ENCODE measurements at regions of chr14 and their contacts with region 1.

Region 1: GRCh38 chr14:94373708-94374107 is 14.7 kb downstream of the SERPINA1 start:
- DNase-seq: no peak
- ATAC-seq: no peak
- H3K4me3 Mint-ChIP-seq: no peak overlapping the region
- H3K27ac Mint-ChIP-seq: no peak overlapping the region; the same call in 1 of the 2 replicates
- H3K4me1 Mint-ChIP-seq: peaks cover 23% of the 10 kb centered on the region
- H3K27me3 Mint-ChIP-seq: no peaks in the 10 kb centered on the region
- CTCF ChIP-seq: no peak

Region 2: DNA sequence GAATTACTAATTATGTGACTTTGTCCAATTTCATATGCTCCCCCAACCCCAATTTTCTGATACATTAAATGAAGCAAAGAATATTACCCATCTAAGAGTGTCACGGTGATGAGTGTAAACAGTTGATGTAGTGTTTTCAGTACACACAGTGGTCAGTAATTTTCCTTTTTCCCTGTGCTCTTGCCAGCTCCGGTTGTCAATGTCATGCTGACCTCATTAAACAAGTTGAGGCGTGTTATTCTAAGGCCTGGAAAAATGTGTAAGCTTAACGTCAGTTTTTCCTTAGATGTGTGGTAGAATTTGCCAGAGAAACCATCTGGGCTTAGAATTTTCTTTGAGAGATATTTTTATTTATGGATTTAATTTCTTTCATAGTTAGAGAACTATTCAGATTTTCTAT is 38.9 kb before region 1 on chr14:
- CTCF ChIA-PET with region 1: no interaction called
- POLR2A ChIA-PET with region 1: no interaction called
- DNase-seq: no peak
- ATAC-seq: no peak
- H3K4me3 Mint-ChIP-seq: no peak overlapping the region
- H3K27ac Mint-ChIP-seq: no peak overlapping the region
- H3K4me1 Mint-ChIP-seq: no peaks in the 10 kb centered on the region
- H3K27me3 Mint-ChIP-seq: no peaks in the 10 kb centered on the region
- CTCF ChIP-seq: no peak

Region 3: GRCh38 chr14:94355191-94355797 is 18.4 kb before region 1 on chr14:
- CTCF ChIA-PET with region 1: interaction called, 15 read pairs
- POLR2A ChIA-PET with region 1: no interaction called
- DNase-seq: peak; percentile 69
- ATAC-seq: peak; percentile 98
- H3K4me3 Mint-ChIP-seq: no peak overlapping the region
- H3K27ac Mint-ChIP-seq: peak overlapping the region; percentile 20; the same call in 1 of the 2 replicates
- H3K4me1 Mint-ChIP-seq: peaks cover 16% of the 10 kb centered on the region
- H3K27me3 Mint-ChIP-seq: no peaks in the 10 kb centered on the region
- CTCF ChIP-seq: no peak

Region 4: DNA sequence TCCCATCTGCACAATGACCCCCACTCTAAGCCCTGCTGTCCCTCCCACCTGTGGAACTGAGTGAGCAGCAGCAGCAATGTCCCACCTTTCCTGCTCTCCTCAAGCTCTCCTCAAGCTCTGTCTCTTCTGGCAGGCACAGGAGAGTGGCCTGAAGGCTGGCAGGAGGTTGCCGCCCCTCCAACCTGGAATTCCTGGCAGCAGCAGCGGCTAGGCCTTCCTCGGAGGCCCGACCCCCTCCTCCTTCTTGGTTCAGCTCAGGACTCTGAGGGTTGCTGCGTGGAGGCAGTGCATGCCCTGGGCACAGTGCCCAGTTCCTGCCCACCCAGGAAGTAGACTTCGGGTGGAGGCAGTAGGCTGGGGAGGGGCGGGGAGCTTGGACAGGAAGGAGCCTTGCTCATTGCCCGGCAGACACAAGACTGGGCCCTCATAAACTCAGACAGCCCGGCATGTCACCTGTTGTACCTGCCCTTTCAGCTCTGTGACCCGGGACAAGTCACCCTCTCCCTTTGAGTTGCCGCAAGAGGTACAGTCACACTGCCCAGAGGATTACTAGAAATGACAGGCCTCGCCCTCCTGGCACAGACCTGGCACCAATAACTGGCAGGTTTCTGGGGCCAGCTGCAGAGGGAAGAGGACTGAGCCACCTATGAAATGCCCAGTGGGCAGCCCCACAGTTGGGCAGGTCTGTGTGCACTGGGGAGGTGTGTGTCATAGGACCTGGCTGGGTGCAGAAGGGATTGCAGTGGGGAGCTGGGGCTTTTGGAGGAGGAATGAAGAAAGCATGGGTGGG is 16.9 kb after region 1 on chr14:
- CTCF ChIA-PET with region 1: interaction called, 14 read pairs
- POLR2A ChIA-PET with region 1: no interaction called
- DNase-seq: no peak
- ATAC-seq: peak; percentile 50
- H3K4me3 Mint-ChIP-seq: no peak overlapping the region
- H3K27ac Mint-ChIP-seq: no peak overlapping the region
- H3K4me1 Mint-ChIP-seq: peaks cover 18% of the 10 kb centered on the region
- H3K27me3 Mint-ChIP-seq: no peaks in the 10 kb centered on the region; the same call in 1 of the 2 replicates
- CTCF ChIP-seq: no peak